ENCODE measurements at regions of chr1 and their contacts with region 1.

Region 1: GRCh38 chr1:94541175-94542087 is at the start of gene F3:
- DNase-seq: peak; percentile 93 to 97 (median 94)
- H3K4me3 ChIP-seq: peak within 1 kb of the TSS; percentile 73
- H3K27ac ChIP-seq: peak within 1 kb of the TSS; percentile 82 to 89
- H3K4me1 ChIP-seq: peaks cover 10% of the 10 kb centered on the region
- H3K27me3 ChIP-seq: no peaks in the 10 kb centered on the region
- CTCF ChIP-seq: no peak
- EP300 ChIP-seq: no peak
- POLR2A ChIP-seq: peak; percentile 92
- total RNA-seq, gene F3: 38.5 to 365 (median 112) TPM

Region 2: GRCh38 chr1:94599095-94599813 is 57.8 kb after region 1 on chr1:
- intact Hi-C with region 1: loop called in 1 of 4 experiments (anchors 5 kb)
- DNase-seq: peak; percentile 37 to 73 (median 67)
- H3K4me3 ChIP-seq: no peak overlapping the region
- H3K27ac ChIP-seq: no peak overlapping the region
- H3K4me1 ChIP-seq: peaks cover 1% of the 10 kb centered on the region
- H3K27me3 ChIP-seq: no peaks in the 10 kb centered on the region
- CTCF ChIP-seq: peak in 1 of 3 donors; percentile 47
- EP300 ChIP-seq: no peak
- POLR2A ChIP-seq: no peak

Region 3: DNA sequence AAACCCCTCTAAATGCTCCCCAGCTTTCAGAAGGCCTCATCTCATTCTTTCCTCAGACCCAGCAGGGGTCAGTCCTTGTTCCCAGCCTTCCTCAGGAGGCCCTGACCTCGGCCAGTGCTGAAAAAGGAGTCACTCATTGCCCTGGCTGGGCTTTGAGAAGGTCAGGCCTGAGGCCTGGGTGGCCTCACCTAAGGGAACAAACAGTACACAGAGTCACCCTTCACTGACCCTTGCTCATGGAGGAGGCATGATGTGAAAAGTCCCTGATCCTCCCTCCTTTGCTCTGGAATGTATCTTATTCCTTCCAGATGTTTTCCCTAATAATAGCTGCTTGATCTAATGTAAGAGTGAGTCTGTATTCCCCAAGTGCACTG is 161.0 kb after region 1 on chr1:
- intact Hi-C with region 1: loop called in 2 of 4 experiments (anchors 10 kb)
- DNase-seq: peak; percentile 55 to 88 (median 67)
- H3K4me3 ChIP-seq: no peak overlapping the region
- H3K27ac ChIP-seq: peak overlapping the region in 1 of 2 donors; percentile 81
- H3K4me1 ChIP-seq: peaks cover 6% of the 10 kb centered on the region
- H3K27me3 ChIP-seq: no peaks in the 10 kb centered on the region
- CTCF ChIP-seq: no peak
- EP300 ChIP-seq: no peak
- POLR2A ChIP-seq: no peak

Region 4: GRCh38 chr1:94792473-94793295 is 251.3 kb after region 1 on chr1:
- intact Hi-C with region 1: loop called in 1 of 4 experiments (anchors 5 kb)
- DNase-seq: no peak
- H3K4me3 ChIP-seq: no peak overlapping the region
- H3K27ac ChIP-seq: peak overlapping the region in 1 of 2 donors; percentile 63
- H3K4me1 ChIP-seq: peaks cover 11% of the 10 kb centered on the region
- H3K27me3 ChIP-seq: no peaks in the 10 kb centered on the region
- CTCF ChIP-seq: peak in 2 of 3 donors; percentile 9 to 30
- EP300 ChIP-seq: no peak
- POLR2A ChIP-seq: no peak

Measured in ovary (tissue), 10 donors.